MCF 10A (cell line): ENCODE measurements at regions of chr6 and their contacts with region 1.

Region 1: GRCh38 chr6:16723826-16724225 is 37.4 kb downstream of the ATXN1 start:
- DNase-seq: peak; percentile 88
- H3K4me3 Mint-ChIP-seq: peak overlapping the region; percentile 47
- H3K27ac Mint-ChIP-seq: peak overlapping the region; percentile 87
- H3K4me1 Mint-ChIP-seq: peaks cover 37% of the 10 kb centered on the region
- H3K27me3 Mint-ChIP-seq: no peaks in the 10 kb centered on the region
- CTCF ChIP-seq: no peak

Region 2: GRCh38 chr6:16136621-16137450 is 587.0 kb before region 1 on chr6:
- CTCF ChIA-PET with region 1: no interaction called
- POLR2A ChIA-PET with region 1: no interaction called
- intact Hi-C with region 1: no loop called
- DNase-seq: peak; percentile 78
- H3K4me3 Mint-ChIP-seq: peak overlapping the region; percentile 43
- H3K27ac Mint-ChIP-seq: peak overlapping the region; percentile 54
- H3K4me1 Mint-ChIP-seq: peaks cover 29% of the 10 kb centered on the region
- H3K27me3 Mint-ChIP-seq: no peaks in the 10 kb centered on the region
- CTCF ChIP-seq: no peak

Region 3: DNA sequence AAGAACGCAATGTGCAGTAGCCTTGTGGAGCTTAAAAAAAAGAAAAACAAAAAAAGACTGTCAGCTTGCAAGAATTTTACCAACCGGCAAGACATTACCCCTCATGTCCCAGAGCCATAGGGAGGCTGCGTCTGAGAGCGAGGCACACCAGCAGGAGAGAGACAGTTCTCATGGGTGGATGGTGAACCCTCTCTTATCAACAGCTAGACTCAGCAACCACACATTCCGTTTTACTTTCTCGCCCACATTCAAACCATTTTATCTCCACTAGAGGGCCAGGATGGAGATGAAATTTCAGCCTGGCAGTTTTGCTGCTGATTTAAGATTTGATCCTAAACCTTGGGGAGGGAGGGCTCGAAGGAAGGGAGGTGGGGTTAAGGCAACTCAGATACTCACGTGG is 209.6 kb before region 1 on chr6:
- CTCF ChIA-PET with region 1: interaction called, 13 read pairs
- POLR2A ChIA-PET with region 1: interaction called, 4 read pairs
- intact Hi-C with region 1: no loop called
- DNase-seq: peak; percentile 29
- H3K4me3 Mint-ChIP-seq: no peak overlapping the region
- H3K27ac Mint-ChIP-seq: no peak overlapping the region
- H3K4me1 Mint-ChIP-seq: peaks cover 10% of the 10 kb centered on the region
- H3K27me3 Mint-ChIP-seq: no peaks in the 10 kb centered on the region
- CTCF ChIP-seq: peak; percentile 20

Region 4: DNA sequence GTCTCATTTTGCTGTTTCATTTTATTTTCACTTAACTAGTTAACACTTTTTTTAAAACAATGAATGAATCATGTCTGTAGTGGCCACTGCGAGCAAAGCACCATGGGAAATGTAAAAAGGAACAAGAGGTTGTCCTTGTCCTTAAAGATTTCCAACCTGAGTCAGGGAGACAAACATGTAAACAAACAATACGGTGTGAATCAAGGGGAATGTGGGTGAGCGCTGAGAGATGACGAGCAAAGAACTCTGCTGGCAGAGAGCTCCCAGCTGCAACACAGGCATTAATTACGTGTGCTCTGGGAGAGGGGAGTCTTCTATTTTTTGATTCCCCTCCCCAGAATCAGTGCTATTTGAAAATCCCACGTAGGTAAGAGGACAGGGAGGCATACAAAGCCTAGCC is 46.8 kb before region 1 on chr6:
- CTCF ChIA-PET with region 1: interaction called, 5 read pairs
- POLR2A ChIA-PET with region 1: interaction called, 127 read pairs
- intact Hi-C with region 1: loop called (anchors 2 kb)
- DNase-seq: peak; percentile 61
- H3K4me3 Mint-ChIP-seq: peak overlapping the region; percentile 24
- H3K27ac Mint-ChIP-seq: peak overlapping the region; percentile 85
- H3K4me1 Mint-ChIP-seq: peaks cover 34% of the 10 kb centered on the region
- H3K27me3 Mint-ChIP-seq: no peaks in the 10 kb centered on the region
- CTCF ChIP-seq: no peak

Region 5: DNA sequence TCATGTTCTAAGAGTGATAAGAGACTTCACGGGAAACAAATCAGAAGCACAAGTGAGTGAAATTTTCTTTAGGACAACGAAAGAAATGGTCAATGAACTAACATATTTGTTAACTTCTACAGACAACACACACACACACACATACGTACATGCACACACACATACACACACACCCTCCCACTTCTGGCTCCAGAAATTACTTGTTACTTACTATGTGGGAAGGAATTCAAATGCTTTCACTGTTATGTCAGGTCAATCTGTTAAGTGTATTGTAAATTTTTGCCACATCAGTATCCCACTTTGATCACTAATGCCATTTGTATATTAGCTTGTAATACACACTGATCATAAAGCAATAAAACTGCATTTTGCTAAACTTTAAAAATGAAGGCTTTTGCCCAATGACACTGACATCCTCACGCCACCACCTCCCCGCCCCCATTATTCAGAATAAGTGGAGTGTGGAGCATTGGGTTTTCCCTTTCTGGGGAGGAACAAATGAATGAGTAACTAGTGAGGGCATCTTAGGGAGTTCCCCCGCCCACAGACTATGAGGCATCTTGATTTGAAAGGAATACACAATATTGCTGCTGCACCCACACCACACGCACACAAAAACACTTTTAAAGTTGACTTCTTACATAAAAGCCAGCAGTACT is 38.8 kb before region 1 on chr6:
- CTCF ChIA-PET with region 1: interaction called, 5 read pairs
- POLR2A ChIA-PET with region 1: interaction called, 127 read pairs
- intact Hi-C with region 1: loop called (anchors 2 kb)
- DNase-seq: peak; percentile 85
- H3K4me3 Mint-ChIP-seq: no peak overlapping the region
- H3K27ac Mint-ChIP-seq: no peak overlapping the region
- H3K4me1 Mint-ChIP-seq: peaks cover 48% of the 10 kb centered on the region
- H3K27me3 Mint-ChIP-seq: no peaks in the 10 kb centered on the region
- CTCF ChIP-seq: no peak

Region 6: GRCh38 chr6:16712931-16713484 is 10.8 kb before region 1 on chr6:
- CTCF ChIA-PET with region 1: interaction called, 12 read pairs
- POLR2A ChIA-PET with region 1: interaction called, 93 read pairs
- intact Hi-C with region 1: loop called (anchors 1 kb)
- DNase-seq: peak; percentile 95
- H3K4me3 Mint-ChIP-seq: peak overlapping the region; percentile 63
- H3K27ac Mint-ChIP-seq: peak overlapping the region; percentile 96
- H3K4me1 Mint-ChIP-seq: peaks cover 28% of the 10 kb centered on the region
- H3K27me3 Mint-ChIP-seq: no peaks in the 10 kb centered on the region
- CTCF ChIP-seq: no peak

Region 7: GRCh38 chr6:16741112-16742016 is 17.5 kb after region 1 on chr6:
- CTCF ChIA-PET with region 1: interaction called, 15 read pairs
- POLR2A ChIA-PET with region 1: interaction called, 85 read pairs
- intact Hi-C with region 1: no loop called
- DNase-seq: no peak
- H3K4me3 Mint-ChIP-seq: no peak overlapping the region
- H3K27ac Mint-ChIP-seq: no peak overlapping the region
- H3K4me1 Mint-ChIP-seq: peaks cover 27% of the 10 kb centered on the region
- H3K27me3 Mint-ChIP-seq: no peaks in the 10 kb centered on the region
- CTCF ChIP-seq: no peak

Region 8: DNA sequence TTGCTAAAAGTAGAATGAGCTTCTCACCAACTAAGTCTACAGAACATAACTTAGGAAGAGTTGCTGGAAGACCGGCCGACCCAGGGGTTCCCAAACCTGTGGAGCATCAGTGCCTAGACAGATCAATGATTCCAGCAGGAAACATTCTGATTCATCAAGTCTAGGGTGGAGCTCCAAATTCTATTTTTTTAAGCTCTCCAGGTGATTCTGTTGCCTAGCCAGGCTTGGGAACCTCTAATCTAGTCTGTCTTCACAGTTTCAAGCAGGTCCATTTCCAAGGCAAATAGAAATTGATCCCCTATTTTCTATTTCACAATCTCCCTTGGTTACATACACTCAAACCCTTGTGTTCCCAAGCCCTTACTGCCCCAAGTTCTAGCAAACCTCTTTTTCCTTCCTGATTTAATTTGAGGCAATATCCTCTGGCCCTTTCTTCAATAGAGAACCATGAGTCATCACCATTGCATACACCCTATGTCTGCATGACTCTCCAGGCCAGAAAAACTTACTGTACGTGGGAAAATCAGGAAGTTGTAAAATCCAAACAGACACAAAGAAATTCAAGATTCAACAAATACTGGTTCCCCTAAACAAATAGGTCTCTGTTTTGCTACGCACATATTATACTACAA is 28.5 kb after region 1 on chr6:
- CTCF ChIA-PET with region 1: interaction called, 5 read pairs
- POLR2A ChIA-PET with region 1: interaction called, 80 read pairs
- intact Hi-C with region 1: no loop called
- DNase-seq: peak; percentile 87
- H3K4me3 Mint-ChIP-seq: peak overlapping the region; percentile 7
- H3K27ac Mint-ChIP-seq: peak overlapping the region; percentile 55
- H3K4me1 Mint-ChIP-seq: peaks cover 36% of the 10 kb centered on the region
- H3K27me3 Mint-ChIP-seq: no peaks in the 10 kb centered on the region
- CTCF ChIP-seq: no peak

Region 9: DNA sequence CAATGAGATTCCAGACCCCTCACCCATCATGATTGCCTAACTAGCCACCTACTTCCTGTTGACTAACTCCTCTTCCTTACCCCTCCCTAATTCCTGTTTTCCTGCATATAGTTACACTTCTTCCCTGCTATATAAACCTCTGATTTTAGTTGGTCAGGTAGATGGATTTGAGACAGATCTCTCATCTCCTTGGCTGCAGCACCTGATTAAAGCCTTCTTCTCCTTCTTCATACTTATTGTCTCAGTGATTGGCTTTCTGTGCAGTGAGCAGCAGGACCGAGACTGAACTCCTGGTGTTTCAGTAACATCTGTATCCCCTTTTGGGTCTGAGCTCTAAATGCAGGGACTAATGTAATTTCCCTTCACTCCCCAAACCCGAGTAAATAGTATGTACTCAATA is 89.2 kb after region 1 on chr6:
- CTCF ChIA-PET with region 1: no interaction called
- POLR2A ChIA-PET with region 1: no interaction called
- intact Hi-C with region 1: no loop called
- DNase-seq: no peak
- H3K4me3 Mint-ChIP-seq: no peak overlapping the region
- H3K27ac Mint-ChIP-seq: no peak overlapping the region
- H3K4me1 Mint-ChIP-seq: no peaks in the 10 kb centered on the region
- H3K27me3 Mint-ChIP-seq: no peaks in the 10 kb centered on the region
- CTCF ChIP-seq: no peak

Region 10: GRCh38 chr6:16956361-16956760 is 232.5 kb after region 1 on chr6:
- CTCF ChIA-PET with region 1: no interaction called
- POLR2A ChIA-PET with region 1: no interaction called
- intact Hi-C with region 1: no loop called
- DNase-seq: no peak
- H3K4me3 Mint-ChIP-seq: no peak overlapping the region
- H3K27ac Mint-ChIP-seq: no peak overlapping the region
- H3K4me1 Mint-ChIP-seq: no peaks in the 10 kb centered on the region
- H3K27me3 Mint-ChIP-seq: no peaks in the 10 kb centered on the region
- CTCF ChIP-seq: no peak